ENCODE measurements at regions of chr9 and their contacts with region 1.

Region 1: GRCh38 chr9:129145822-129146292 is 32.2 kb downstream of the IER5L start:
- DNase-seq: peak in 1 of 2 donors; percentile 81
- H3K4me3 ChIP-seq: no peak overlapping the region
- H3K27ac ChIP-seq: peak overlapping the region; percentile 98
- H3K4me1 ChIP-seq: peaks cover 48 to 64% of the 10 kb centered on the region in 2 donors
- H3K27me3 ChIP-seq: no peaks in the 10 kb centered on the region
- CTCF ChIP-seq: no peak

Region 2: DNA sequence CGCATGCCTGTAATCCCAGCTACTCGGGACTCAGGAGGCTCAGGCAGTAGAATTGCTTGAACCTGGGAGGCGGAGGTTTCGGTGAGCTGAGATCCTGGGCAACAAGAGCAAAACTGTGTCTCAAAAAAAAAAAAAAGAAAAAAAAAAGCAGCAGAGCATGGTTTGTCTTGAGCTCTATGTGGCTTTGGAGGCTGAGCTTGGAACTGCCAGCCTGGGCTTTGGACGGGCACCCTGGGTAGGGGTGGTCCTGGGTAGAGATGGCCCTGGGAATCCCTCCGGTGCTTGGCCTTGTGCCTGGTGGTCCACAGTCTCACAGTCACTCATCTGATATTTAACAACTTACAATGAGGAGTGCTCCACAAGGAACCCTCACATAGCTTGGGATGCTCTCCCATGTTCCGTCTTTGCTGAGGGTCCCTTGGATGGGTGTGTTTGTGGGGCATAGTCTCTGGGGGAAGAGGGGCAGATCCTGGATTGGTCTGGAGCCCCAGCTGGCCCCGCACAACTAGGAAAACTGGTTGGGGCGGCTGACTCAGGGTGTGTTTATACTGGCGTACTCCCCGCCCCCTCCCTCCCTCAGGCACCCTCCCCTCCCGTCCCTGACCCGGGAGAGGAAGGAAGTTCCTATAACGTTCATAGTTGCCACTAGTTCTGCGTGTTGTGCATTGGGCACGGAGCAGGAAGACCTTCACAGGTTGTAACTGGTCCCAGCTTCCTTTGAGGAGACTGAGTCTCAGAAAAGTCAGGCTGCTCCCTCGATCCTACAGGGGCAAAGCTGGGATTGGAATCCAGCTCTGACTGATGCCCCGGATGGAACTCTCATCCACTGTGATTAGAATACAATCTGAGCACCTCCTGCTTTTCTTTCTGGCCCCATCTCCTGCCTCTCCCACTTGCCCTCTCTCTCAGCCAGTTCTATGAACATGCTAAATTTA is 21.0 kb after region 1 on chr9:
- intact Hi-C with region 1: loop called (anchors 1 kb)
- DNase-seq: peak in 1 of 2 donors; percentile 89
- H3K4me3 ChIP-seq: peak overlapping the region; percentile 17 to 54
- H3K27ac ChIP-seq: peak overlapping the region; percentile 85 to 92
- H3K4me1 ChIP-seq: peaks cover 0 to 33% of the 10 kb centered on the region in 2 donors
- H3K27me3 ChIP-seq: no peaks in the 10 kb centered on the region
- CTCF ChIP-seq: no peak

Region 3: DNA sequence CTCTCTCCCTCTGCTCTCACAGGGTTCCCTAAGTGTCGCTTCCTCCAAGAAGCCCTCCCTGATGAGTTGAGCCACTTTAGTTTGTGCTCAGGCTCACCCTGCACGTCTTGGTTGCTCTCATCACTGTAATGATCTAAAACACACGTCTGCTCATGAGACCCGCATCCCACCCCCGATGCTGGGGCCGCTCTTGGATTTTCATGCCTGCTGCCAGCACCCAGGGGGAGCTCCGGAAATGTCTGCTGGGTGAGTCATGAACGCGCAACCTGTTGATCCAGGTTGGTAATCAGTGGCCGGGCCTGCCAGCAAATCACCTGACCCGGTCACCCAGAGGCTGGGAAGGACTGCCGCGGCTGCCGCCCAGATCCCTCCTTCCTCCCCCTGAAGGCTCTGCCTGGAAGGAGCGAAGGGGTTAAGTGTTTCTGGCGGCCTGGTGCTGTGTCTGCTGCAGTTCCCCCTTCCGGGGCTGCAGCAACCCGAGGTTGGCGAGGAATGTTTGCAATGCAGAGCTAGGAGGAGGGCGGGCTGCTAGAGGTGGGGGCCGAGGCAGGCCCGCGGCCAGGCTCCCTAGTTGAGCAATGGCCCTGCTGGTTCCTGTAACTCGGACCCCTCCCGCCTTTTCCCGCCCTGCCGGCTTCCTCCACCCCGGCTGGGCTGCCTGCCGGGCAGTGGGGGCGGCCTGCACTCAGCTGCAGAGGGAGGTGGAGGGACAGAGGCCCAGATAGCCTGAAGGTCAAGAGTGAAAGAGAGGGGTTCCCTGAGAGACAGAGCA is 188.3 kb after region 1 on chr9:
- intact Hi-C with region 1: no loop called
- DNase-seq: peak; percentile 74 to 96
- H3K4me3 ChIP-seq: peak overlapping the region; percentile 9 to 19
- H3K27ac ChIP-seq: peak overlapping the region; percentile 84 to 96
- H3K4me1 ChIP-seq: peaks cover 33 to 52% of the 10 kb centered on the region in 2 donors
- H3K27me3 ChIP-seq: no peaks in the 10 kb centered on the region
- CTCF ChIP-seq: no peak